OCI-LY7 (cell line): ENCODE measurements at regions of chr6 and their contacts with region 1.

Region 1: DNA sequence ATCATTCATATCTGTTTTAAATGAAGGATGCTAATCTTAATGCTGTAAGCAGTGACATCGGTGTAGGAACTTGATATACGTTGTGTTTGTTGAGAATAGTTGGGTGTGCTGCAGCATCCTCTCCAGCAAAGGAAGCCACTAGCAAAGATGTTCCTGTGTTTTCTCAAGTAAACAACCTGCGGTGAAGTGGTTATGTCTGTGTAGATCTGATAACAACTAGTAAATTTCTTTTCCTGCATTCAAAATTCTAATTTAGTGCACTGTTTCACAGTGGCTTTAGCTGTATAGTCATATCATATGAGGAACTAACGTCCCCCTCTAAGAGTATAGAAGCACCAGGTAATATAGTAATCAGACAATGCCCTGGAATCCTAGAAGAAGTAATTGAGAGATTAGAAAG is 38.7 kb downstream of the NCOA7 start:
- DNase-seq: no peak
- H3K4me3 ChIP-seq: no peak overlapping the region
- H3K27ac ChIP-seq: no peak overlapping the region
- H3K4me1 ChIP-seq: peaks cover 8% of the 10 kb centered on the region
- CTCF ChIP-seq: no peak

Region 2: DNA sequence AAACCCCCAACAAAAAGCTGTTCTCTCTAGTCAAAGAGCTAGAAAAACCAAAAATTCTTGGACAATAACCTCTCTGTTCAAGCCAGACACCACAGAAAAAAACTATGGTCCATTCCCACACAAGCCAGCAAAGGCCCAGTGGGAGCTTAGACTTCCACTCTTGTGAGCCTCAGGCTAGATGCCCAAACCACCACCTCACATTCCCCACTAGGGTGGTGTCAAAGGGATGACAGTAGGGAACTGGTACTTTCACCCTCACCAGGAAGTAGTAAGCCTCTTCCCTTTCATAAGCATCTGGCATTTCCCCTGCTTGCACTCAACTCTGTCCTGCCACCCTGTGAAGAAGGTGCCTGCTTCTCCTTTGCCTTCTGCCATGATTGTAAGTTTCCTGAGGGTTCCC is 925.6 kb before region 1 on chr6:
- CTCF ChIA-PET with region 1: no interaction called
- POLR2A ChIA-PET with region 1: no interaction called
- intact Hi-C with region 1: no loop called
- DNase-seq: no peak
- H3K4me3 ChIP-seq: no peak overlapping the region
- H3K27ac ChIP-seq: no peak overlapping the region
- H3K4me1 ChIP-seq: no peaks in the 10 kb centered on the region
- CTCF ChIP-seq: no peak

Region 3: DNA sequence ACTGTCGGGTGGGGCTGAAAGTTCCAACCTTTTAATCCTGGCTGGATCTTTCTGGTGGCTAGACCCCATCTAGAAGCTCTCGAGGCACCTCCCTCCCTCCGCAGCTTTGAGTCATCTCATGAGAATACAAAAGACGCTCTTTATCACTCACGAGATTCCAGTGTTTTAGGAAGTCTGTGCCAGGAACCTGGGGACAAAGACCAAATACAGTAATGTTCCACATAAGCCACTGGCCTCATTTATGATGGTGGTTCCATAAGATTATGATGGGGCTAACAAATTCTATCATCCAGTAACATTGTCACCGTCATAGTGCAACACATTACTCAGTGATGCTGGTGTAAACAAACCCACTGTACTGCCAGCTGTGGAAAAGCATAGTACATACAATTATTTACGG is 10.0 kb after region 1 on chr6:
- CTCF ChIA-PET with region 1: no interaction called
- POLR2A ChIA-PET with region 1: interaction called, 21 read pairs
- intact Hi-C with region 1: no loop called
- DNase-seq: no peak
- H3K4me3 ChIP-seq: no peak overlapping the region
- H3K27ac ChIP-seq: no peak overlapping the region
- H3K4me1 ChIP-seq: peaks cover 18% of the 10 kb centered on the region
- CTCF ChIP-seq: no peak